Activated CD8-positive, alpha-beta T cell treated with anti-CD3 and anti-CD28 coated beads for 36 hours (primary cell): ENCODE measurements at regions of chr1 and their contacts with region 1.

Region 1: DNA sequence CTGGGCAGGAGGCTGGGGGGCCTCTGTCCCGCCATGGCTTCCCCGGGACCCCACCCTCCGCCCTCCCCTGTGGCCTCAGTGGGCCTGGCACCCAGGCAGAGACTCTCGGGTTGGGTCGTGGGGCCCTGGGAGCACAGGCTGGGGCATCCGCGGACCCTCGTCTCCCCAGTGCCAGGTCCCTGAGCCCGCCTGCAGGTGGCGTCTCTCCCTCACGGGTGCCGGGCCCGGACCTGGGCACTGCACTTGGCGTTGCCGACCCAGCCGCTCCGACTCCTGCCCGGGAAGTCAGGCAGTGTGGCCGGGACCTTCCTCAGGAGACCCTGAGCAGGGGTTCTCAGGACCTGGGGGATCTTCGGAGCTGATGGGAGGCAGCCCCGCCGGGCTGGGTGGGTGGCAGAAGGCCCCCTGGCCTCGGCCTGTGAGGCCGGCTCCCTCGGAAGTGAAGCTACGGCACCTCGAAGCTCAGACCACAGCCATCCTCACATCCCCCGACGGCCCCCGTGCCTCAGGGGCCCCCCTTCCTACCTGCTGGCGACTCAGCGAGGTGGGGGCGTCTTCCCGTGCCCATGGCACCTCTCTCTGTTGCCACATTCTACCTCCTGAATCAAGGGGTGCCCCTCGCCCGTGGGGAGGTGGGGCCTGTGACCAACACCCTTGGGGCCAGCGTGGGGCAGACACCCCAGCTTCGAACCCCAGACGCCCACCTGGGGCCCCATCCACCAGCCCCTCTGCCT is 6.4 kb upstream of the C1orf159 start:
- DNase-seq: peak; percentile 87
- ATAC-seq: peak; percentile 94
- H3K4me3 Mint-ChIP-seq: no peak overlapping the region
- H3K27ac Mint-ChIP-seq: no peak overlapping the region
- H3K4me1 Mint-ChIP-seq: peaks cover 14% of the 10 kb centered on the region
- H3K27me3 Mint-ChIP-seq: peaks cover 7% of the 10 kb centered on the region
- CTCF ChIP-seq: peak; percentile 91

Region 2: GRCh38 chr1:1033009-1033587 is 89.1 kb before region 1 on chr1:
- CTCF ChIA-PET with region 1: interaction called, 11 read pairs
- POLR2A ChIA-PET with region 1: interaction called, 3 read pairs
- intact Hi-C with region 1: no loop called
- DNase-seq: peak; percentile 97
- ATAC-seq: peak; percentile 96
- H3K4me3 Mint-ChIP-seq: peak overlapping the region; percentile 42
- H3K27ac Mint-ChIP-seq: no peak overlapping the region
- H3K4me1 Mint-ChIP-seq: peaks cover 12% of the 10 kb centered on the region
- H3K27me3 Mint-ChIP-seq: peaks cover 23% of the 10 kb centered on the region
- CTCF ChIP-seq: peak; percentile 90

Region 3: DNA sequence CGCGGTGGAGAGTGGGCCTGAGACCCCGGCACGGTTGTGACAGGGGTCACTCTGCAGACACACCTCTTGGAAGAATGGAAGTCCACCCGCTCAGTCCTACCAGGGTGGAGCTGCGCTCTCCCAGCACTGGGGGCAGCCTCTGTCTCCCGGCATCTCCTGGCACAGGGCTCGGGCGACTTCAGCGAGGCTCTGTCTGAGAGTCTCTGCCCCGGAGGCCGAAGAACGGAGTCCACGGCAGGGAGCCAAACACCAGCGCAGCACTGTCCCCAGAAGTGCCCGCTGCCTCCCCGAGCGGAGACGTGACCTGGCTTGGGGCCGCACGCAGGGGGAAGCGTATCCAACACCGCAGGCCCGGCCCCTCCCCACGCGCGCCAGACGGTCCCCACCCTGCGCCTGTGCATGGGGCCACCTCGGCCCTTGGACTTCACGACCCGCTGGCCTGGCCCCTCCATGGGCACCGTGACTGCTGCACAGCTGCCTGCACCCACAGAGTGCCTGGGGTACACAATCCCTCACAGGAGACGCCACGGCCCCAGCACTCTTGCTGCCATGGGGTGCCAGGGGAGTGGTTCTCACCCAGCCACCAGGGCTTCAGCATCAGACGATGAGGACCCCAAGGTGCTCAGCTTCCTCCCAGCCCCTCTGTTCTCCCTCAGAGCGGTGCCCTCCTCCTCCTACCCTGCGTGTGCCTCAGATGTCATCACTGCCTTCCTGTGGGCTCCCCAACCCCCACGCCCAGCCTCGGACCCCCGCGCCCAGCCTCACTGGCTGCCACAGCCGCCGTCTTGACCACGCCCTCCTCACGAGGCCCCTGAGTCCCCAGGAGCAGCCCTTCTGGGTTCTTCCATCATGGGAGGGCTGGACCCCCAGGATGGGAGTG is 33.2 kb before region 1 on chr1:
- CTCF ChIA-PET with region 1: no interaction called
- POLR2A ChIA-PET with region 1: no interaction called
- intact Hi-C with region 1: no loop called
- DNase-seq: peak; percentile 3
- ATAC-seq: no peak
- H3K4me3 Mint-ChIP-seq: no peak overlapping the region
- H3K27ac Mint-ChIP-seq: no peak overlapping the region
- H3K4me1 Mint-ChIP-seq: peaks cover 6% of the 10 kb centered on the region
- H3K27me3 Mint-ChIP-seq: no peaks in the 10 kb centered on the region
- CTCF ChIP-seq: no peak

Region 4: GRCh38 chr1:1173793-1174415 is 51.7 kb after region 1 on chr1 and contains the start of gene TTLL10:
- CTCF ChIA-PET with region 1: interaction called, 15 read pairs
- POLR2A ChIA-PET with region 1: no interaction called
- intact Hi-C with region 1: no loop called
- DNase-seq: peak; percentile 75
- ATAC-seq: peak; percentile 60
- H3K4me3 Mint-ChIP-seq: no peak within 1 kb of the TSS
- H3K27ac Mint-ChIP-seq: no peak within 1 kb of the TSS
- H3K4me1 Mint-ChIP-seq: peaks cover 28% of the 10 kb centered on the region
- H3K27me3 Mint-ChIP-seq: peaks cover 7% of the 10 kb centered on the region
- CTCF ChIP-seq: no peak
- total RNA-seq, gene TTLL10: not detected

Region 5: GRCh38 chr1:1217621-1218523 is 95.6 kb after region 1 on chr1:
- CTCF ChIA-PET with region 1: interaction called, 17 read pairs
- POLR2A ChIA-PET with region 1: no interaction called
- intact Hi-C with region 1: no loop called
- DNase-seq: peak; percentile 47
- ATAC-seq: no peak
- H3K4me3 Mint-ChIP-seq: no peak overlapping the region
- H3K27ac Mint-ChIP-seq: peak overlapping the region; percentile 76
- H3K4me1 Mint-ChIP-seq: peaks cover 44% of the 10 kb centered on the region
- H3K27me3 Mint-ChIP-seq: no peaks in the 10 kb centered on the region
- CTCF ChIP-seq: no peak

Region 6: DNA sequence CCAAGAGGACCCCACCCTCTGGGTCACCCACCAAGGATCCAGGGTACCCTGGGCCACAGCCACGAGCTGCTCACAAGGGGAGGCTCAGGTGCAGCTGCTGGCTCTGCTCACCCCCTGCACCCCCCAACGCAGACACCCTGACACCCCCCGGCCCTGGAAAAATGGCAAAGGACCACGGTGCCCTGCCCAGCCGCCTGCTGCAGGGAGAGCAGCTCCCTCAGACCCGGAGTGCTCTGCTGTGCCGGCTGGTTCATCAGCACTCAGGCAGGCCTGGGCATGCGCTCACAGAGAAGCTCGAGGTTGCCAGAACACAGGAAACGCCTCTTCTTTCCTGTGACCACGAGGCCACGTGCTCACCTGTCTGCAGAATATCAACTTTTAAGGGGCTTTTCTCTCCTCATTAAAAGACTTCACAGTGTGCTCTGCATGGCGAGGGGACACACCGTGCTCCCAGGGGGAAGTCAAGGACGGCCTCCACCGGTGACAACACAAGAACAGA is 128.6 kb after region 1 on chr1:
- CTCF ChIA-PET with region 1: interaction called, 50 read pairs
- POLR2A ChIA-PET with region 1: interaction called, 5 read pairs
- intact Hi-C with region 1: no loop called
- DNase-seq: peak; percentile 95
- ATAC-seq: peak; percentile 95
- H3K4me3 Mint-ChIP-seq: peak overlapping the region; percentile 15
- H3K27ac Mint-ChIP-seq: peak overlapping the region; percentile 94
- H3K4me1 Mint-ChIP-seq: peaks cover 16% of the 10 kb centered on the region
- H3K27me3 Mint-ChIP-seq: no peaks in the 10 kb centered on the region
- CTCF ChIP-seq: no peak

Region 7: GRCh38 chr1:1291548-1292441 is 169.6 kb after region 1 on chr1:
- CTCF ChIA-PET with region 1: interaction called, 37 read pairs
- POLR2A ChIA-PET with region 1: interaction called, 3 read pairs
- intact Hi-C with region 1: no loop called
- DNase-seq: peak; percentile 84
- ATAC-seq: peak; percentile 87
- H3K4me3 Mint-ChIP-seq: no peak overlapping the region
- H3K27ac Mint-ChIP-seq: no peak overlapping the region
- H3K4me1 Mint-ChIP-seq: peaks cover 2% of the 10 kb centered on the region
- H3K27me3 Mint-ChIP-seq: no peaks in the 10 kb centered on the region
- CTCF ChIP-seq: peak; percentile 69